Endothelial cell of umbilical vein (primary cell): ENCODE measurements at regions of chr5 and their contacts with region 1.

Region 1: GRCh38 chr5:60613826-60614225 is 86.1 kb downstream of the DEPDC1B start:
- DNase-seq: no peak
- H3K4me3 ChIP-seq: no peak overlapping the region
- H3K27ac ChIP-seq: no peak overlapping the region
- H3K4me1 ChIP-seq: no peaks in the 10 kb centered on the region
- H3K27me3 ChIP-seq: no peaks in the 10 kb centered on the region
- CTCF ChIP-seq: no peak
- POLR2A ChIP-seq: no peak

Region 2: DNA sequence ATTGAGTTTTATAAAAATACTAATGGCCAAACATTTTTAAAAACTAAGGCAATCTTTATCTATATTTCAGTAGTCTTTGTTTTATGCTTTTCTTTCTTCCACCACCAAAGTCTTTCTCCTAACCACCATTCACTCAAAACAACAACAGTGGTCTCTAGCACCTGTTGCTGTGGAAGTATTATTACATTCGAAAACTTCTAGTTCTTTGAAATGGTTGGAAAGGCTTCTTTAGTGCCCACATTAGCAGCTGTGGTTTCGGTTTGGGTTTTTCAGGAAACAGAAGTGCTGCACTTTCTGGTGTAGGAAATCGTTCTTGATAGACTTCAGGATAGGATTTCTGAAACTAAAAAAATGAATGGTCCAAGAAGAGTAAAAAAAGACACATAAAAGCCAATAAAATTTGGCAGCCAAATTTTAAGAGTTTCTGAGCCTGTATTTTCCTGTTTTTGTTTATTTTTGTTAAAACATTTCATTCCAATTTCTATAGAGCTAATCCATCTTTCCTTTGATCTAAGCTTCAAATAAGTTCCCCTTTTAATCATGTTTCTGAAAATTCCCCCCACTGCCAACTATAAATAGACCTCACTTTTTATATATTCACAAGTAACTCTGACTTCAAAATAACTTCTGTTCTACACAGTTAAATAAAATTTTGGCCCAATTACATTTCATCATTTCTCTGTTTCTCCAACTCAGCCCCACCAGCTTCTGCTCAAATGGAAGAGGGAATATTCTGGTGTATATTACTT is 16.1 kb before region 1 on chr5:
- CTCF ChIA-PET with region 1: interaction called, 11 read pairs
- POLR2A ChIA-PET with region 1: no interaction called
- dilution Hi-C with region 1: no loop called
- intact Hi-C with region 1: no loop called
- DNase-seq: peak; percentile 49
- H3K4me3 ChIP-seq: no peak overlapping the region
- H3K27ac ChIP-seq: no peak overlapping the region
- H3K4me1 ChIP-seq: no peaks in the 10 kb centered on the region
- H3K27me3 ChIP-seq: no peaks in the 10 kb centered on the region
- CTCF ChIP-seq: no peak
- POLR2A ChIP-seq: no peak